WTC11 (cell line): ENCODE measurements at regions of chr7 and their contacts with region 1.

Region 1: GRCh38 chr7:51187941-51188340 is 128.7 kb downstream of the COBL start:
- DNase-seq: peak; percentile 84
- ATAC-seq: peak; percentile 100
- H3K4me3 Mint-ChIP-seq: no peak overlapping the region
- H3K27ac Mint-ChIP-seq: peak overlapping the region; percentile 89
- H3K4me1 Mint-ChIP-seq: peaks cover 9% of the 10 kb centered on the region
- H3K27me3 Mint-ChIP-seq: no peaks in the 10 kb centered on the region
- CTCF ChIP-seq: no peak; the same call in 1 of the 2 replicates

Region 2: GRCh38 chr7:51175316-51175991 is 12.5 kb before region 1 on chr7:
- CTCF ChIA-PET with region 1: interaction called, 13 read pairs
- POLR2A ChIA-PET with region 1: no interaction called
- DNase-seq: no peak
- ATAC-seq: peak; percentile 94
- H3K4me3 Mint-ChIP-seq: 0 out of 2 replicates have a peak overlapping the region, but pooled peaks have one; percentile 28
- H3K27ac Mint-ChIP-seq: peak overlapping the region; percentile 97
- H3K4me1 Mint-ChIP-seq: peaks cover 44% of the 10 kb centered on the region
- H3K27me3 Mint-ChIP-seq: no peaks in the 10 kb centered on the region
- CTCF ChIP-seq: no peak

Region 3: DNA sequence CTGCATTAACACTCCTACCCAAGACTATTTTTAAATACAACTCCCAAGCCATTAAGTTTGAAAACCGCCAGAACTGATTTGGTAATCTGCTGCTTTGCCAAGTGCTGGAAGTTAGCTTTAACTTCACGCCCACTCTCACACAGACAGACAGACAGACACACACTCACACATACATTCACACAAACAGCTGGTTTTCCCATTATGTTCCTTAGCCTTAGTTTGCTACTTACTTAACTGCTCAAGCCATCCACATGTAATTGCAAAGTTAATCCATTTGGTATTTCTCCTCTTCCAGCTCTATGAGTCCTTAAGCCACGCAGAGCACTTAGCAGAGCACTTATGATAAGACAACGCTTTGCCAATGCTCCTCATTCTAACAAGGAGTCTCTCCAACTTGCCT is 120.3 kb after region 1 on chr7:
- CTCF ChIA-PET with region 1: interaction called, 19 read pairs
- POLR2A ChIA-PET with region 1: no interaction called
- DNase-seq: no peak
- ATAC-seq: no peak
- H3K4me3 Mint-ChIP-seq: no peak overlapping the region
- H3K27ac Mint-ChIP-seq: peak overlapping the region; percentile 57
- H3K4me1 Mint-ChIP-seq: peaks cover 70% of the 10 kb centered on the region
- H3K27me3 Mint-ChIP-seq: no peaks in the 10 kb centered on the region
- CTCF ChIP-seq: no peak

Region 4: DNA sequence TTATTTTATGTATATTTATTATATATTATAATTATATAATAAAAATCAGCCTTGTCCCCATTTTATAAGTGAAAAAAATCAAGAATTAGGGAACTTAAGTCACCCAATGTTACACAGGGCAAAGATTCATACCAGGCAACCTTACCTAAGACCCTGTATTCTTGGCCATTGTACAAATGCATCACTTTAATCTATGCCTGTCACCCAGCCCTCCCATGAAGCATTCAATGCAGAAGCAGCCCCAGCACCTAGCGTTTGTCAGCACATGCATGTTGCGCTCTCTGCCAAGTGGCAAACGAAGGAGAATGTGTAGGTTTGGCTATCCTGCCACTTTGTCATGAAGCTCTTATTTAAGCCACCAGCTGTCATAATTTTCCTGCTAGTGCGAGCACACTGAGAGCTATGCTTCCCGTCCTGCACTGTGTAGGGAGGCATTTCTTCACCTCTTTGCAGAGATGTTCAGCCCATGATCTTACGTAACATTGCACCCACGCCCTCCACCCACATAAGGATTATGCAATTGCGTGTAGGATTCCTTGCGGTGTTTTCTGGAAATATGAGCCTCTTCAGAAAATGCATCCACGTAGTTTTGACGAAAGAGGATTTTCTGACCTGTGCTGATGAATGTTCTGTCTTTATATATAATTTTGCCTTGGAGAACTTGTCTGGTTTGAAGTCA is 136.4 kb after region 1 on chr7:
- CTCF ChIA-PET with region 1: interaction called, 15 read pairs
- POLR2A ChIA-PET with region 1: no interaction called
- DNase-seq: no peak
- ATAC-seq: no peak
- H3K4me3 Mint-ChIP-seq: no peak overlapping the region
- H3K27ac Mint-ChIP-seq: peak overlapping the region; percentile 37
- H3K4me1 Mint-ChIP-seq: peaks cover 82% of the 10 kb centered on the region
- H3K27me3 Mint-ChIP-seq: peaks cover 32% of the 10 kb centered on the region
- CTCF ChIP-seq: no peak

Region 5: GRCh38 chr7:51357821-51358220 is 169.9 kb after region 1 on chr7:
- CTCF ChIA-PET with region 1: interaction called, 11 read pairs
- POLR2A ChIA-PET with region 1: no interaction called
- DNase-seq: no peak
- ATAC-seq: no peak
- H3K4me3 Mint-ChIP-seq: no peak overlapping the region
- H3K27ac Mint-ChIP-seq: no peak overlapping the region
- H3K4me1 Mint-ChIP-seq: peaks cover 20% of the 10 kb centered on the region
- H3K27me3 Mint-ChIP-seq: no peaks in the 10 kb centered on the region; the same call in 1 of the 2 replicates
- CTCF ChIP-seq: no peak

Region 6: DNA sequence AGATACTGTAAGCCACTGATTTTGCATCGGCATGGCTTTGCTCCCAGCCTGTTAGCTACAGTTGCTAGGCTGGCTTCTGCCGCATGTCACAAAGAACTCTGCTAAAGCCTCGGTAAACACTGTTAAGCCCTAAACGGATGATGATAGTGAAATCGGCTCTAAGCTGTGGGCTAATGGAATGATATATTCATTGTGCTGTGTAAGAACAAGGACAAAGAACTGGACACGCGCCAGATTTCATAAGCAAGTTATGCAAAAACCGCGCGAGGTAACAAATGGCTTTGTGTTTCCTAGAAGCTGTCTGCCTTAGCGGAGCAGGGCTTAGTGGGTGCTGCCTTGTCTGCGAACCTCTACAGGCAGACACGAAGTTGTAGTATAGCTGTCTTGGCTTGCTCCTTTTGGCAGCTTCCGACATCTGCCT is 460.0 kb after region 1 on chr7:
- CTCF ChIA-PET with region 1: no interaction called
- POLR2A ChIA-PET with region 1: no interaction called
- DNase-seq: no peak
- ATAC-seq: no peak; the same call in 1 of the 2 replicates
- H3K4me3 Mint-ChIP-seq: no peak overlapping the region
- H3K27ac Mint-ChIP-seq: no peak overlapping the region
- H3K4me1 Mint-ChIP-seq: peaks cover 4% of the 10 kb centered on the region; the same call in 1 of the 2 replicates
- H3K27me3 Mint-ChIP-seq: no peaks in the 10 kb centered on the region
- CTCF ChIP-seq: no peak